AG04450 (cell line): ENCODE measurements at regions of chr12 and their contacts with region 1.

Region 1: GRCh38 chr12:127677537-127678131 is 589.3 kb upstream of the TMEM132C start:
- DNase-seq: peak; percentile 38
- H3K4me3 ChIP-seq: no peak overlapping the region
- H3K27ac ChIP-seq: no peak overlapping the region
- H3K27me3 ChIP-seq: no peaks in the 10 kb centered on the region
- CTCF ChIP-seq: peak; percentile 74

Region 2: GRCh38 chr12:127108360-127109215 is 569.0 kb before region 1 on chr12:
- CTCF ChIA-PET with region 1: interaction called, 11 read pairs
- POLR2A ChIA-PET with region 1: no interaction called
- DNase-seq: no peak
- H3K4me3 ChIP-seq: no peak overlapping the region
- H3K27ac ChIP-seq: no peak overlapping the region
- H3K27me3 ChIP-seq: no peaks in the 10 kb centered on the region
- CTCF ChIP-seq: peak; percentile 65

Region 3: GRCh38 chr12:127381048-127381668 is 296.5 kb before region 1 on chr12:
- CTCF ChIA-PET with region 1: interaction called, 34 read pairs
- POLR2A ChIA-PET with region 1: no interaction called
- DNase-seq: no peak
- H3K4me3 ChIP-seq: peak overlapping the region; percentile 55
- H3K27ac ChIP-seq: no peak overlapping the region
- H3K27me3 ChIP-seq: no peaks in the 10 kb centered on the region
- CTCF ChIP-seq: peak; percentile 74

Region 4: GRCh38 chr12:127485528-127485927 is 192.1 kb before region 1 on chr12:
- CTCF ChIA-PET with region 1: interaction called, 35 read pairs
- POLR2A ChIA-PET with region 1: no interaction called
- DNase-seq: peak; percentile 68
- H3K4me3 ChIP-seq: no peak overlapping the region
- H3K27ac ChIP-seq: no peak overlapping the region
- H3K27me3 ChIP-seq: no peaks in the 10 kb centered on the region
- CTCF ChIP-seq: peak; percentile 52

Region 5: GRCh38 chr12:127660961-127661360 is 16.7 kb before region 1 on chr12:
- CTCF ChIA-PET with region 1: interaction called, 10 read pairs
- POLR2A ChIA-PET with region 1: no interaction called
- DNase-seq: no peak
- H3K4me3 ChIP-seq: no peak overlapping the region
- H3K27ac ChIP-seq: no peak overlapping the region
- H3K27me3 ChIP-seq: no peaks in the 10 kb centered on the region
- CTCF ChIP-seq: no peak

Region 6: DNA sequence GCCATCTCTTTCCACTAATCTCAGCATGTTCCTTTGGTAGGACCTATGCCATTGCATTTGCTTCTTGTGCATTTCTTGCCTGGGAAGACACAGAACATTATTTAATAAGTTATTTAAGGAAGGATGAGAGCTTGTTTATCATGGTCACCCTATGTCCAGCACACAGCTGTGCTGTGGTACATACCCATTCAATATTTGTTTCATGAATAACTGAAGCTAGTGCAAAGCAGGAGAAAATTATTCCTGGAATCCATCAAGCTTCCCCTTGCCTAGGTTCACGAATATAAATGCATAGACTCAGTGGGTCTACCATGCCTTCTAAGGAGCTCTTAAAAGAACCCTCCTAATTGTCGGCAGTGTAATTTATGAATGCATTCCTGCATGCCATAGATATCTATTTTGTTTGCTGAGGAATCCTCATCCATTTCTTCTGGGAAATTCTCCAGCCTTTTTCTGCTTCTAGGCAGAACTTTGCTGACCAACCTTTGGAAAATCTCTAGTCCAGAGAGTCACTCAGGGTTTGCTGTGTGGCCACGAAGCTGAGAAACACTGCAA is 10.4 kb before region 1 on chr12:
- CTCF ChIA-PET with region 1: interaction called, 32 read pairs
- POLR2A ChIA-PET with region 1: no interaction called
- DNase-seq: no peak
- H3K4me3 ChIP-seq: no peak overlapping the region
- H3K27ac ChIP-seq: no peak overlapping the region
- H3K27me3 ChIP-seq: no peaks in the 10 kb centered on the region
- CTCF ChIP-seq: no peak

Region 7: DNA sequence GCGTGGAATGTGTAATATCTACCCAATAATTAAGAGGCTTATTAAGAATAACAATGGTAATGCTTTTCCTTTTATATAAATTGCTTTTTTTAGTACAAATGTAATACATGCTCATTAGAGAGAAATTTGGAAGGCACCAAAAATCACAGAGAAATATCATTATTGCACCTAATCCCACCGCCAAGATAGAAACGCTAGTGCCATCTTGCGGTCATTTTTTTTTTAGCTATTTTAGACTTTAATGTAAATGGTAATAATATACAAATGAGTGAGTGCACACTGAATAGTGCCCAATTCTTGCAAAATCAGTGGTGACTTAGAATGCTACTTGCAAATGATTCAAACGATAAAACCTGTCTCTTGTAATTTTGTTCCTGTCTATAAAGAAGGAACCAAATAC is 12.5 kb after region 1 on chr12:
- CTCF ChIA-PET with region 1: interaction called, 10 read pairs
- POLR2A ChIA-PET with region 1: no interaction called
- DNase-seq: no peak
- H3K4me3 ChIP-seq: no peak overlapping the region
- H3K27ac ChIP-seq: no peak overlapping the region
- H3K27me3 ChIP-seq: no peaks in the 10 kb centered on the region
- CTCF ChIP-seq: peak; percentile 38

Region 8: GRCh38 chr12:127717284-127717683 is 39.6 kb after region 1 on chr12:
- CTCF ChIA-PET with region 1: no interaction called
- POLR2A ChIA-PET with region 1: no interaction called
- DNase-seq: no peak
- H3K4me3 ChIP-seq: no peak overlapping the region
- H3K27ac ChIP-seq: no peak overlapping the region
- H3K27me3 ChIP-seq: no peaks in the 10 kb centered on the region
- CTCF ChIP-seq: no peak

Region 9: GRCh38 chr12:127860536-127860935 is 182.9 kb after region 1 on chr12:
- CTCF ChIA-PET with region 1: no interaction called
- POLR2A ChIA-PET with region 1: no interaction called
- DNase-seq: no peak
- H3K4me3 ChIP-seq: no peak overlapping the region
- H3K27ac ChIP-seq: no peak overlapping the region
- H3K27me3 ChIP-seq: no peaks in the 10 kb centered on the region
- CTCF ChIP-seq: no peak